Uterus (tissue), 4 donors: ENCODE measurements at regions of chr21 and their contacts with region 1.

Region 1: GRCh38 chr21:45136927-45137611 is 62.7 kb downstream of the ADARB1 start:
- DNase-seq: peak; percentile 88 to 90
- H3K4me3 ChIP-seq: no peak overlapping the region
- H3K27ac ChIP-seq: no peak overlapping the region
- H3K4me1 ChIP-seq: no peaks in the 10 kb centered on the region
- H3K27me3 ChIP-seq: no peaks in the 10 kb centered on the region
- CTCF ChIP-seq: peak; percentile 79 to 84 (median 83)
- POLR2A ChIP-seq: no peak

Region 2: GRCh38 chr21:44817506-44817880 is 319.6 kb before region 1 on chr21:
- intact Hi-C with region 1: no loop called
- DNase-seq: peak; percentile 90 to 94
- H3K4me3 ChIP-seq: peak overlapping the region; percentile 60 to 92
- H3K27ac ChIP-seq: peak overlapping the region; percentile 91 to 96
- H3K4me1 ChIP-seq: peaks cover 0 to 9% of the 10 kb centered on the region in 2 donors
- H3K27me3 ChIP-seq: no peaks in the 10 kb centered on the region
- CTCF ChIP-seq: no peak
- POLR2A ChIP-seq: no peak

Region 3: DNA sequence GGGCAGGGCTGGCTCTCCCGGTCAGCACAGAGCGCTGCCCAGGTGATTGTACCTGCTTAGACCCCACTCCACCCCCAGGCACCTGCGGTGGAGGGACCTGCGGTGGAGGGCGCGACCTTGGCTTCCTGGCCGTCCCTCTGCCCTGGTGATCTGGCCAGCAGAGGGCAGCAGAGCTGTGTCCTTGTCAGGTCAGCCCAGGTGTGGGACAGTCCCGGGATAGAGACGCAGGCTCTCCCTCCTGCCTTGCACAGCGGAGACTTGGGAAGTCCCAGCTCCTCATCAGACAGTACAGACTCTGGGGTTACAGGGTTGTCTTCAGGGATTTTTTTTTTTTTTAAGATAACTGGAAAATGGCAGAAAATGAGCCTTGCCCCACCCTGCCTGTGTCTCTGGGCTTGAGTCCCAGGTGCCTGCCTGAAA is 187.3 kb before region 1 on chr21:
- intact Hi-C with region 1: loop called (anchors 5 kb)
- DNase-seq: peak; percentile 87 to 90
- H3K4me3 ChIP-seq: no peak overlapping the region
- H3K27ac ChIP-seq: peak overlapping the region; percentile 36 to 62
- H3K4me1 ChIP-seq: peaks cover 0 to 3% of the 10 kb centered on the region in 2 donors
- H3K27me3 ChIP-seq: no peaks in the 10 kb centered on the region
- CTCF ChIP-seq: peak; percentile 90 to 95 (median 94)
- POLR2A ChIP-seq: no peak

Region 4: DNA sequence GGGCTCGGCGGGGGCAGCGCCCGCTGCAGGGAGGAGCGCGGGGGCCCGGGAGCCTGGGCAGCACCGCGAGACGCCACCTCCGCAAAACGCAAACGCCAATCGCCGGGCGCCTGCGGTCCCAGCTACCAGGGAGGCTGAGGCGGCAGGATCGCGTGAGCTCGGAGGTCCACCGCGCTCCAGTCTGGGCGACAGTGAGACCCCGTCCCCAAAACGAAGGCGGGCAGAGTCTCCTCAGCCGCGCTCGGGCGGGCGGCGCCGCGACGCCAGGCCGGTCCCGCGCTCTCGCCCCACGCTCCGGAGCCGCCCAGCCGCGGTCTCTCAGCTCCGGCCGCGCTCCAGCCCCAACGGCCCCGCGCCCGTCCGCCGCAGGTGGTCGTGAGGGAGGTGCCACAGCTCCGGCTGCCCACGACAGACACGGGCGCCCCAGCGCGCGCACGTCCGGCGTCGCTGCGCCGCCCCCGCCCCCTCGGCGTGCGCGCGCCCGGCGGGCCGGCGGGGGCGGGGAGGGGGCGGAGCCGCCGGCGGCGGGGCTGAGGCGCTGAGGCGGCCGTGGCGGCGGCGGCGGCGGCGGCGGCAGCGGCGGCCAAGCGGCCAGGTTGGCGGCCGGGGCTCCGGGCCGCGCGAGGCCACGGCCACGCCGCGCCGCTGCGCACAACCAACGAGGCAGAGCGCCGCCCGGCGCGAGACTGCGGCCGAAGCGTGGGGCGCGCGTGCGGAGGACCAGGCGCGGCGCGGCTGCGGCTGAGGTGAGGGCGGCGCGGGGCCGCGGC is 62.8 kb before region 1 on chr21 and contains the start of gene ADARB1:
- intact Hi-C with region 1: loop called (anchors 10 kb)
- DNase-seq: peak; percentile 50 to 66
- H3K4me3 ChIP-seq: peak within 1 kb of the TSS; percentile 76 to 93
- H3K27ac ChIP-seq: peak within 1 kb of the TSS; percentile 80 to 92
- H3K4me1 ChIP-seq: peaks cover 0 to 4% of the 10 kb centered on the region in 2 donors
- H3K27me3 ChIP-seq: no peaks in the 10 kb centered on the region
- CTCF ChIP-seq: no peak
- POLR2A ChIP-seq: peak; percentile 51 to 88
- total RNA-seq, gene ADARB1: 21.8 to 69.6 (median 43.3) TPM

Region 5: DNA sequence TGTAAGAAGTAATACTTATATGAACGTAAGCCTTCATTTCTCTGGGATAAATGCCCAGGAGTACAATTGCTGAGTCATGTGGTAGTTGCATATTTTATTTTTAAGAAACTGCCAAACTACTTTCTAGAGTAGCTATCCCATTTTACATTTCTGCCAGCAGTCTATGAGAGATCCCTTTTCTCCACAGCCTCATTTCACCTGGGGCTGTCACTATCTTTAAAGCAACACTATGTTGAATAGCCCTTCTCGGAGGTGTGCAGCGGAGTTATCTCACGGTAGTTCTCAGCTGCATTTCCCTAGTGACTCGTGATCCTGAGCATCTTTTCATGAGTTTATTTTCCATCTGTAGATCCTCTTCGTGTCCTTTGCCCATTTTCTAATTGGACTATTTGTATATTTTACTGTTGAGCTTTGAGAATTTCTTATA is 30.7 kb after region 1 on chr21:
- intact Hi-C with region 1: no loop called
- DNase-seq: no peak
- H3K4me3 ChIP-seq: no peak overlapping the region
- H3K27ac ChIP-seq: peak overlapping the region; percentile 1 to 33
- H3K4me1 ChIP-seq: peaks cover 0 to 10% of the 10 kb centered on the region in 2 donors
- H3K27me3 ChIP-seq: no peaks in the 10 kb centered on the region
- CTCF ChIP-seq: no peak
- POLR2A ChIP-seq: no peak